Natural killer cell (primary cell): ENCODE measurements at regions of chr2 and their contacts with region 1.

Region 1: DNA sequence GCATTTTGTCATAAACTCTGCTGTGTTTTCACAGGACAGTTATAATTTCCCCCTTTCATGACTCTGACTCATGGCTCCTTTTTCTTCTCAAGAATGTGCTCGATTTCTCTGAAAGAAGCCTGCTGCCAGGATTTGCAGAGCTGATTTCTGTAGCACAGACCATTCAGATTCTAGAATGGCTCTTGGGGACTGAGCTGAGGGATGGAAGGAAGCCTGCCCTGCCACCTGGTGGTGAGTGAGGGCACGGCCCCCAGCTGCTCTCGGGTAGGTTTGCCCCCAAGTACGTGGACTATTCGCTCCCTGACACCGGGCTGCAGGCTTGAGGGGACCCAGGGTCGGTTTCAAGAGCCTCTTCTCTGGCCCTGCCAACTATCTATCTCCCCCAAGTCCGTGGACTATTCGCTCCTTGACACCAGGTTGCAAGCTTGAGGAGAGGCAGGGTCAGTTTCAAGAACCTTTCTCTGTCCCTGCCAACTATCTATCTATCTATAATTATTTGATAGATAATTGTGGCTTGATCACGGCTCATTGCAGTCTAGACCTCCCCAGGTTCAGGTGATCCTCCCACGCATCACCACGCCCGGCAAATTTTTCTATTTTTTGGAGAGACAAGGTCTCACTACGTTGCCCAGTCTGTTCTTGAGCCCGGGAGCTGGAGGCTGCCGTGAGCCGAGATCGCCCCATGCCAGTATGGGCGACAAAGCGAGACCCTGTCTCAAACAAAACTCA is 1.4 kb upstream of the SMYD5 start:
- DNase-seq: peak; percentile 68 to 87
- ATAC-seq: peak; percentile 69 to 78 (median 76)
- H3K4me3 ChIP-seq: no peak overlapping the region
- H3K4me3 Mint-ChIP-seq: no peak overlapping the region
- H3K27ac ChIP-seq: no peak overlapping the region
- H3K27ac Mint-ChIP-seq: no peak overlapping the region
- H3K4me1 ChIP-seq: peaks cover 21% of the 10 kb centered on the region
- H3K4me1 Mint-ChIP-seq: peaks cover 17 to 26% of the 10 kb centered on the region in 2 donors
- H3K27me3 ChIP-seq: no peaks in the 10 kb centered on the region
- H3K27me3 Mint-ChIP-seq: peaks cover 8 to 14% of the 10 kb centered on the region in 2 donors
- CTCF ChIP-seq: peak; percentile 94

Region 2: GRCh38 chr2:73085691-73086360 is 126.8 kb before region 1 on chr2:
- intact Hi-C with region 1: loop called (anchors 1 kb)
- DNase-seq: peak; percentile 74 to 86
- ATAC-seq: peak; percentile 88 to 100 (median 97)
- H3K4me3 ChIP-seq: no peak overlapping the region
- H3K4me3 Mint-ChIP-seq: no peak overlapping the region
- H3K27ac ChIP-seq: no peak overlapping the region
- H3K27ac Mint-ChIP-seq: no peak overlapping the region
- H3K4me1 ChIP-seq: no peaks in the 10 kb centered on the region
- H3K4me1 Mint-ChIP-seq: peaks cover 0 to 6% of the 10 kb centered on the region in 2 donors
- H3K27me3 ChIP-seq: no peaks in the 10 kb centered on the region
- H3K27me3 Mint-ChIP-seq: peaks cover 0 to 2% of the 10 kb centered on the region in 2 donors
- CTCF ChIP-seq: peak; percentile 83

Region 3: GRCh38 chr2:73293534-73294171 is 81.0 kb after region 1 on chr2 and contains the start of gene EGR4:
- intact Hi-C with region 1: loop called (anchors 5 kb)
- DNase-seq: peak; percentile 85 to 95
- ATAC-seq: peak; percentile 93 to 95 (median 94)
- H3K4me3 ChIP-seq: peak within 1 kb of the TSS; percentile 30
- H3K4me3 Mint-ChIP-seq: peak within 1 kb of the TSS; percentile 72
- H3K27ac ChIP-seq: no peak within 1 kb of the TSS
- H3K27ac Mint-ChIP-seq: peak within 1 kb of the TSS in 1 of 2 donors; percentile 75
- H3K4me1 ChIP-seq: peaks cover 26% of the 10 kb centered on the region
- H3K4me1 Mint-ChIP-seq: peaks cover 7 to 8% of the 10 kb centered on the region in 2 donors
- H3K27me3 ChIP-seq: peaks cover 63% of the 10 kb centered on the region
- H3K27me3 Mint-ChIP-seq: peaks cover 59 to 62% of the 10 kb centered on the region in 2 donors
- CTCF ChIP-seq: no peak
- total RNA-seq, gene EGR4: 0.28 to 2.6 (median 1.1) TPM